Activated B cell treated with CpG ODN at 0.5 μM for 24 hours (primary cell): ENCODE measurements at regions of chr4 and their contacts with region 1.

Region 1: GRCh38 chr4:102826890-102827673 is at the start of gene UBE2D3:
- DNase-seq: peak; percentile 94
- ATAC-seq: peak; percentile 49
- H3K4me3 Mint-ChIP-seq: no peak within 1 kb of the TSS
- H3K27ac Mint-ChIP-seq: no peak within 1 kb of the TSS
- H3K4me1 Mint-ChIP-seq: peaks cover 33% of the 10 kb centered on the region
- H3K27me3 Mint-ChIP-seq: no peaks in the 10 kb centered on the region
- CTCF ChIP-seq: no peak
- total RNA-seq, gene UBE2D3: 321 and 327 TPM in 2 replicates

Region 2: DNA sequence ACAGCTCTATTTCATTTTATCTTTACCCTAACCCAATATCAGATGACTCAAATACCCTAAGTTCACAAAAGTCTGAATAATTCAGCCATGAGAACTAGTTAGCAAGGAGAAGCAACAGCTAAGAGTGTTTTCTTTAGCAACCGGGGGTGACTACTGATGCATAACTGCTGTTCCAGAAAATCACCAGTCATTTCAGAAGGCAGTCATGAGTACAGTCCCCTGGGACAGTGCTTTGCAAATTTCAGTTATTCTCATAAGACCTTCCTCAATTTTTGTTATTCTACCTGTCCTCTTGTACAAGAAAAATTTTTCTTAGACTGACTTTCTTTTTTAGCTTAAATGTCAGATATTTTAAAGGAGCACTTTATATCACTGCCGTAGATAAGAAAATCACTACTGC is 1020.2 kb before region 1 on chr4:
- CTCF ChIA-PET with region 1: no interaction called
- POLR2A ChIA-PET with region 1: no interaction called
- intact Hi-C with region 1: loop called (anchors 5 kb)
- DNase-seq: no peak
- ATAC-seq: peak; percentile 87
- H3K4me3 Mint-ChIP-seq: peak overlapping the region; percentile 73
- H3K27ac Mint-ChIP-seq: peak overlapping the region; percentile 95
- H3K4me1 Mint-ChIP-seq: peaks cover 83% of the 10 kb centered on the region
- H3K27me3 Mint-ChIP-seq: no peaks in the 10 kb centered on the region
- CTCF ChIP-seq: no peak

Region 3: DNA sequence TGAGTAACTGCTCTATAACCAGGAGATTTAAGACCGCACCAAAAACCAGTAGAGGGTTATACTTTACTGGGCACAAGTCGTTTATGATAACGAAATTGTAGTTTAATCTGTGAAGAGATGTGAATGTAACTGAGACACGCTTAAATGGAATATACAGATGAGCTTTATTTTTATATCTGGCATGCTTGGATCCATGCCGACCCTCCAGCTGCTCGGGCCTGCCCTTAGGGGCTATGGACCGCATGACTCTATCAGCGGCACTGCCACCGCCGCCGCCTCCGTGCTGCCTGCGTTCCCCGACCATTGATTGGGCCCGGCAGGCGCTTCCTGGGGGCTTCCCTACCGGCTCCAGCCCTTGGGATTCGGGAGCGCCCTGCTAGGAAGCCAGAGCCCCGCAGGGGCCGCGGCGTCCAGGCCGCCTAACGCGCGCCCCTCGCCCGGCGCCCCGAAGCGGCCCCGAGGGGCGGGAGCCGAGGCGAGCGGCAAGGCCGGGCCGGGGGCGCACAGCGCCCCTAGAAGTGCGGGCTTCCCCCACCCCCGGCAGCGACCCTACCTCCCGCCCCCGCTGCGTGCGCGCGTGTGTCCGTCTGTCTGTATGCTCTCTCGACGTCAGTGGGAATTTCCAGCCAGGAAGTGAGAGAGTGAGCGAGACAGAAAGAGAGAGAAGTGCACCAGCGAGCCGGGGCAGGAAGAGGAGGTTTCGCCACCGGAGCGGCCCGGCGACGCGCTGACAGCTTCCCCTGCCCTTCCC is 326.2 kb before region 1 on chr4 and contains the start of gene NFKB1:
- CTCF ChIA-PET with region 1: no interaction called
- POLR2A ChIA-PET with region 1: interaction called, 58 read pairs
- intact Hi-C with region 1: loop called (anchors 1 kb)
- DNase-seq: peak; percentile 76
- ATAC-seq: peak; percentile 71
- H3K4me3 Mint-ChIP-seq: peak within 1 kb of the TSS; percentile 97
- H3K27ac Mint-ChIP-seq: peak within 1 kb of the TSS; percentile 95
- H3K4me1 Mint-ChIP-seq: peaks cover 31% of the 10 kb centered on the region
- H3K27me3 Mint-ChIP-seq: no peaks in the 10 kb centered on the region
- CTCF ChIP-seq: no peak
- total RNA-seq, gene NFKB1: 274 and 308 TPM in 2 replicates

Region 4: DNA sequence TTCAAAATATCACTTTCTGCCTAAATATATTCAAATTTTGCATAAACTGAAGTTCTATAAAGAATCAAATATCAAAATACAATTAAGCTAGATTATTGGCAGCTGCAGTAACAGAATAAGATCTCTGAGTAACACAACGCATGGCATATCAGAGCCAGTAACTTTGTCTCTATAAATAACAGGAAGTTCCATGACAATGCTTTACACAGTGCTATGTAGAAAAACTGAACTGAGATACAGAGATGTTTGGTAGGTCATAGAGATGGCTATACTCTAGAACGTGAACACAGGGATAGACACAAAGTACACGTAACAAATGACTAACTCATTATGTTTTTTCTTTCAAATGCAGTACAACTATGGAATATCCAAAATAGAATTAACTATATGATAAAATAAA is 17.9 kb before region 1 on chr4:
- CTCF ChIA-PET with region 1: no interaction called
- POLR2A ChIA-PET with region 1: interaction called, 38 read pairs
- intact Hi-C with region 1: loop called (anchors 1 kb)
- DNase-seq: no peak
- ATAC-seq: peak; percentile 49
- H3K4me3 Mint-ChIP-seq: no peak overlapping the region
- H3K27ac Mint-ChIP-seq: peak overlapping the region; percentile 15
- H3K4me1 Mint-ChIP-seq: peaks cover 51% of the 10 kb centered on the region
- H3K27me3 Mint-ChIP-seq: no peaks in the 10 kb centered on the region
- CTCF ChIP-seq: no peak

Region 5: DNA sequence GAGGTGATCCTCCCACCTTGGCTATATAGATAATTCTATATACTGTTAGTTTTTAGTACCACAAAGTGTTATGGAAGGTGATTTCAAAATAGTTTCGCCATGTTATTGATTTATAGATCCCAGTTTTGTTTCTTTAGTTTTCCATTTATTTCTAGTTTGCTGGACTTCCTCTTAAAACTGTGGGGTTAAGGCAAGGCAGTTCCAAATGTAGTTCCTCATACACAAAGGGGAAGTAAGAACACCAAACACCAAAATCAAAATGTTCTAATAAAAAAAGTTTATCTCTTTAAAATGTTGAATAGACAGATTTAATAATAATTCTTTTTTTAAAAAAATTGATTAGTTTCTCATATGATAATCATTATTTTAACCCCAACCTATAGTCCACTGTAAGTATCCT is 34.9 kb after region 1 on chr4:
- CTCF ChIA-PET with region 1: no interaction called
- POLR2A ChIA-PET with region 1: interaction called, 263 read pairs
- intact Hi-C with region 1: no loop called
- DNase-seq: no peak
- ATAC-seq: no peak
- H3K4me3 Mint-ChIP-seq: no peak overlapping the region
- H3K27ac Mint-ChIP-seq: no peak overlapping the region
- H3K4me1 Mint-ChIP-seq: peaks cover 25% of the 10 kb centered on the region
- H3K27me3 Mint-ChIP-seq: no peaks in the 10 kb centered on the region
- CTCF ChIP-seq: no peak

Region 6: GRCh38 chr4:103019308-103020124 is 192.4 kb after region 1 on chr4 and contains the start of gene SLC9B1:
- CTCF ChIA-PET with region 1: no interaction called
- POLR2A ChIA-PET with region 1: interaction called, 12 read pairs
- intact Hi-C with region 1: loop called (anchors 1 kb)
- DNase-seq: peak; percentile 91
- ATAC-seq: peak; percentile 98
- H3K4me3 Mint-ChIP-seq: peak within 1 kb of the TSS; percentile 92
- H3K27ac Mint-ChIP-seq: peak within 1 kb of the TSS; percentile 96
- H3K4me1 Mint-ChIP-seq: peaks cover 28% of the 10 kb centered on the region
- H3K27me3 Mint-ChIP-seq: no peaks in the 10 kb centered on the region
- CTCF ChIP-seq: no peak
- total RNA-seq, gene SLC9B1: 1.2 and 2.5 TPM in 2 replicates

Region 7: DNA sequence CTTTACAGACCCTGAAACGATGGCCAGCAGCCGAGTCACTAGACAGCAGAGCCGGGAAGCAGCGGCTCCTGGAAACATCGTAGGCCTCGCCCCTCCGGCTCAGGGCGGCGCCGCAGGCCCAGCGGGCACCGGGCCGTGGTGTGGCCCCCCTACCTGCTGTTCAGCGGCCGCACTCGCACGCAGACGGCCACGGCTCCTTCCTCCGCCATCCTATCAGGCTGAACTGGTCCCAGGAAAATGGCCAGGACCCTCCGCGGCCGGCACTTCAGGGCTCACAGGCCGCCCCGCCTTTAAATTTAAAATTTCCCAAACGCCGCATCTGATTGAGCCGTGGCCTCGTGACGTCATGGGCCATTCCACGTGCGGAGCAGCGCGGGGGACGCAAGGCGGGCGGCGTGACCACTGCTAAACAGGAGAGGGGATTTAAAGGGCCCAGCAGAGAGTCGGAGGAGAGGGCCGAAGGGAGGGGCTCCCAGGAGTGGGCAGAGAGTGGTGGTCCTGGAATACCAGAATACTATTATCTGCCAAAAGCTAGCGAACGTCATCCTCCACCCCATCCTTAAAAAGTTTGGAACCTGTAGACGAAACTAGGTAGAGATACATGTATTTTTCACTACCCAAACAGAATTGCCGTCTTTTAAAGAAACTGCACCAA is 371.2 kb after region 1 on chr4 and contains the start of gene CENPE:
- CTCF ChIA-PET with region 1: no interaction called
- POLR2A ChIA-PET with region 1: no interaction called
- intact Hi-C with region 1: loop called (anchors 5 kb)
- DNase-seq: peak; percentile 83
- ATAC-seq: peak; percentile 94
- H3K4me3 Mint-ChIP-seq: peak within 1 kb of the TSS; percentile 93
- H3K27ac Mint-ChIP-seq: peak within 1 kb of the TSS; percentile 91
- H3K4me1 Mint-ChIP-seq: peaks cover 10% of the 10 kb centered on the region
- H3K27me3 Mint-ChIP-seq: no peaks in the 10 kb centered on the region
- CTCF ChIP-seq: no peak
- total RNA-seq, gene CENPE: 2.4 and 2.5 TPM in 2 replicates